CD4-positive, alpha-beta T cell (primary cell): ENCODE measurements at regions of chr19 and their contacts with region 1.

Region 1: DNA sequence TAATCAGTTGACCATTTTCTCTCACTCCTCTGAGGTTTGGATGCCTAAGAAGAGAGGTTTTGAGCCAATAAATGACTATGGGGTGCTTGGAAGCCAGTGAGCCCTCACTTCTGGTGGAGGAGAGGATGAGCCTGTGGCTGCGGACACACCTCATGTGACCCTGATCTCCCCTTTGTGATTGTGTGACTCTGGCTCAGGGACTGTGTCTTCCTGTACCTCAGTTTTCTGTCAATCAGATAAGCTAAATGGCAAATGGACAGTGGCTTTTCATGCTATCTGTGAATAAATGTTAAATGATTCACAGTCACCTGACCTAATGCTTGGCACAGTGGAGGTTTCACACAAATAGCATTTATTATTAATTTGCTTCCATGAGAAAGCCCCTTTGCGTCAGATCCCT is 2.7 kb downstream of the PSG8 start:
- DNase-seq: no peak
- ATAC-seq: no peak
- H3K4me3 ChIP-seq: no peak overlapping the region
- H3K4me3 Mint-ChIP-seq: no peak overlapping the region
- H3K27ac ChIP-seq: no peak overlapping the region
- H3K27ac Mint-ChIP-seq: no peak overlapping the region
- H3K4me1 ChIP-seq: no peaks in the 10 kb centered on the region
- H3K4me1 Mint-ChIP-seq: no peaks in the 10 kb centered on the region
- H3K27me3 ChIP-seq: no peaks in the 10 kb centered on the region
- H3K27me3 Mint-ChIP-seq: peaks cover 23% of the 10 kb centered on the region
- CTCF ChIP-seq: no peak

Region 2: GRCh38 chr19:43207991-43208390 is 445.2 kb after region 1 on chr19:
- CTCF ChIA-PET with region 1: no interaction called
- POLR2A ChIA-PET with region 1: no interaction called
- intact Hi-C with region 1: loop called in 1 of 2 experiments (anchors 5 kb)
- DNase-seq: no peak
- ATAC-seq: no peak
- H3K4me3 ChIP-seq: no peak overlapping the region
- H3K4me3 Mint-ChIP-seq: no peak overlapping the region
- H3K27ac ChIP-seq: no peak overlapping the region
- H3K27ac Mint-ChIP-seq: no peak overlapping the region
- H3K4me1 ChIP-seq: no peaks in the 10 kb centered on the region
- H3K4me1 Mint-ChIP-seq: no peaks in the 10 kb centered on the region
- H3K27me3 ChIP-seq: no peaks in the 10 kb centered on the region
- H3K27me3 Mint-ChIP-seq: peaks cover 29% of the 10 kb centered on the region
- CTCF ChIP-seq: no peak